ENCODE measurements at regions of chr1 and their contacts with region 1.

Region 1: DNA sequence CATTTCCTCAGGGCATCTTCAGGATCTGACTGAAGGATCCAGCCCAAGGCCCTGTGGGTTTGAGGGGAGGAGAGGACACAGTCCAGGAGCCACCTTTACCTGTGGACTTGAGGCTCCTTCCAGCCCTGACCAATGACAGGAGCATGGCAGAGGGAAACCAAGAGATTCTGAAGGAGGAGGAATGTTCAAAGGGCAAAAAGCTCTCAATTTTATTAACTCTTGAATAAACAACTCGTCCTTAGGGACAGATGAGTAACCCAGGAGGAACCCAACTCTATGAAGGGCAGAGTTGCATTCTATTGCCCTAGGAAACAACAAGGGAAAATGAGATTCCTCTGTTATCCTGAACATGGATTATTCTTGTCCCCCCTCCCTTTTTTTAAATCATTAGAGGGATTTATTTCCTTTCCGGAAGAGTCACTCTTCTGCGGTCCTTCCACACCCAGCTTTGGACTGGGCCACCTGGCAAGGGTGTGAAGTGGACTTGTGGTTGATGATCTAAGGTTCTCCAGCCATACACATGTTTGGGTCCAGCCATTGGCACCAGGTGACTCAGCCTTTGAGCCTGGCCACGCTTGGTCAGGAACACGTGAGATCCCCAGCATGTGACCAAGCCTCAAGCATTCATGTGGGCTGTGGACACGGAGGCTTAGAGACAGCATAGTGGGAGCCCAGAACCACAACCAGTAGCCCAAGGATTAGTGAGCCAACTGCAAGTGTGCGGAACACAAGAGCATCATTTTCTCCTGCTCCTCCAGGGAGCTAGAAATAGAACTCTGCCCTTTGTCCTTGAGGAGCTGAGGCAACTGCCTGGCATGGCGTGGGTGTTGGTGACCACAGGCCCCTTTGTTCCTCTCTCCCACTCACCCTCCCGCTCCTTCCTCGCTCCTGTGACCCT is 49.9 kb downstream of the NENF start:
- DNase-seq: peak in 1 of 2 donors; percentile 54
- H3K4me3 ChIP-seq: no peak overlapping the region
- H3K27ac ChIP-seq: peak overlapping the region; percentile 14 to 57
- H3K4me1 ChIP-seq: peaks cover 0 to 44% (median 16%) of the 10 kb centered on the region in 4 donors
- H3K27me3 ChIP-seq: no peaks in the 10 kb centered on the region
- CTCF ChIP-seq: no peak

Region 2: DNA sequence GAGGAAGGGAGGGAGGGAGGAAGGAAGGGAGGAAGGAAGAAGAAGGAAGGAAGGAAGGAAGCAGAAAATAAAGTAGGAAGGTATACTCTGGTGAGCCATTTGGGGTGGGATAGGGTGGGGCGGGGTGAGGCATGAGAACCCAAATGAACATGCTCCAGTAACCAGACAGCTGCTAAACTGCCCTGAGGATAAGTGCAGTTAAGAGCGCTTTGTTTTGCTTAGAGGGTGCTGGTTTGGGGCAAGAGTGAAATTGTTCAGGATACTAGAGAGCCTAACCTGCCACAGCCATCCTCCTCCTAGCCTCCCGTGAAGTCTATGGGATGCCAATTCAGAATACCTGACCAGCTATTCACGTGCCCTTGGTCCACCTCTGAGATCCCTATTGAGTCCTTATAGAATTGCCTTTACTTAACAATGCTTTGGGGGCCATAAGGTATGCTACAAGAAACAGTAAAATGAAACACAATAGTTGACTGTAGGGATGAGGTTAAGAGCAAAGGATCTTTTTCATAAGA is 66.9 kb after region 1 on chr1:
- intact Hi-C with region 1: loop called (anchors 5 kb)
- DNase-seq: no peak
- H3K4me3 ChIP-seq: no peak overlapping the region
- H3K27ac ChIP-seq: no peak overlapping the region
- H3K4me1 ChIP-seq: no peaks in the 10 kb centered on the region
- H3K27me3 ChIP-seq: no peaks in the 10 kb centered on the region
- CTCF ChIP-seq: no peak

Measured in tibial artery (tissue), 4 donors.